HEK293T (cell line): ENCODE measurements at regions of chr12 and their contacts with region 1.

Region 1: GRCh38 chr12:94101738-94102660 is 46.4 kb upstream of the PLXNC1 start:
- DNase-seq: peak; percentile 75

Region 2: GRCh38 chr12:93502802-93503623 is 599.0 kb before region 1 on chr12:
- CTCF ChIA-PET with region 1: interaction called, 16 read pairs
- POLR2A ChIA-PET with region 1: no interaction called
- DNase-seq: peak; percentile 20

Region 3: GRCh38 chr12:94112132-94112531 is 10.1 kb after region 1 on chr12:
- CTCF ChIA-PET with region 1: interaction called, 20 read pairs
- POLR2A ChIA-PET with region 1: no interaction called
- DNase-seq: no peak